ENCODE measurements at regions of chr17 and their contacts with region 1.

Region 1: DNA sequence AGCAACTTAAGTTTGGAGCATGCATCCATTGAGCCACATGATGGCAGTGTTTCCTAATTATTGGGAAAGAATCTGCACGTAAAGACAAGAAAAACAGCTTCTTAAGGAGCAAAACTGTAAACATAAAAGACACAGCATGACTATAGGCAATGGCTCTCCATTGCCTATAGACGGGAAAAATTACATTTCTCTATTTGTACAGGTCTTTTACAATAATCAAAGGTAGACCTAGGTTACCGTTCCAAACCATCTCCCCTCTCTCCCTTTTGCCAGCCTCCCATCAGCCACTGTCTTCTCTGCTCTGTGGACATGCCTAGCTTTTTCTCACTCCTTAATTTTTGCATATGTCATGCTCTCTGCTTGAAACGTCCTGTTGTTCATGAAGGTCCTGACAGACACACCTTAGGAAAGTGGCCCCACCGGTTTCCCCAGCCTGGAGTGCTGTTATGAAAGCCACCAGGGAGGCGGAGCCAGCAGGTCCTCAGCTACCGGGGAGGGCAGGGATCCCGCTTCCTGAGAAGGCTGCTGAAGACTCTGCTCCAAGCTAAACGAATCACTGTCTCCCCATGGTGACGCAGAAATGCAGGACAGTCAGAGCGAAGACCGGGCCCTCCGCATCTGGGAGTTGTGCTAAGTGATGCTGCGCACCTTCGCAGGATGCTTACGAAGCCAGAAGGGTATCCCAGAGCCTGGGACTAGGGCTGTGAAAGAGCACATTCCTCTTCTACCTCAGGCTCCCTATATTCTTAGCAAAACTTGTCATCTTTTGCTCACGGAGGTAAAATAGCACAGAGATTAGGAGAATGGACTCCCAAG is 2.2 kb upstream of the SLC16A11 start:
- DNase-seq: peak; percentile 88 to 95 (median 93)
- H3K4me3 ChIP-seq: peak overlapping the region in 5 of 7 experiments; percentile 8 to 69 (median 33)
- H3K27ac ChIP-seq: no peak overlapping the region
- H3K4me1 ChIP-seq: peaks cover 5 to 42% (median 37%) of the 10 kb centered on the region in 4 experiments
- H3K27me3 ChIP-seq: peaks cover 3 to 43% (median 21%) of the 10 kb centered on the region in 5 experiments

Region 2: GRCh38 chr17:7021993-7022778 is 23.9 kb before region 1 on chr17:
- CTCF ChIA-PET with region 1: interaction called, 9 read pairs
- POLR2A ChIA-PET with region 1: interaction called, 12 read pairs
- DNase-seq: peak; percentile 74 to 95 (median 95)
- H3K4me3 ChIP-seq: peak overlapping the region; percentile 2 to 74 (median 45)
- H3K27ac ChIP-seq: peak overlapping the region in 1 of 2 experiments; percentile 25
- H3K4me1 ChIP-seq: peaks cover 3 to 58% (median 41%) of the 10 kb centered on the region in 4 experiments
- H3K27me3 ChIP-seq: peaks cover 0 to 3% (median 0%) of the 10 kb centered on the region in 5 experiments

Region 3: DNA sequence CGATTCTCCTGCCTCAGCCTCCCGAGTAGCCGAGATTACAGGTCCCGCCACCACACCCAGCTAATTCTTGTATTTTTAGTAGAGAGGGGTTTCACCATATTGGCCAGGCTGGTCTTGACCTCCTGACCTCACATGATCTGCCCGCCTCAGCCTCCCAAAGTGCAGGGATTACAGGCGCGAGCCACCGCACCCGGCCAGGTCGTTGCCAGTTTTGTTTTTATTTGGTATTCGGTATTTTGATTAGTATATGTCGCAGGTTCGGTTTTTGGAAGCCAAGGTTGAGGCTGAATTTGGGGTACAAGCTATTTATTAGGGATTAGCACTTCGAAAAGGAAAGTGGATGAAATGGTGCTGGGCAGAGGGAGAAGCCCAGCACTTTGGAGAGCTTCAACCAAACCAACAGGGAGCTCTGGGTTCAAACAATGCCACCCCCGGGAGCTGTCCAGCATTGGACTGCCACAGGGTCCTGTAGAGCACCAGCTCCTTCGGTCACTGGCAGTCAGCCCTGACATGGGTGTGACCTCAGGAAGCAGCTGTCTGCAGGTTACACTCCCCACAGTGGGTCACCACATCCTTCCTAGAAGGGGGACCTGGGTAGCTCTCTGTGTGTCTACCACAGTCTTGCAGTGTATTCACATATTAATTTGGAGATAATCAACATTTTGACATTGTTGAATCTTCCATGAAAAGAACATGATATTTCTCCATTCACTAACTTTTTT is 35.4 kb after region 1 on chr17:
- CTCF ChIA-PET with region 1: interaction called, 11 read pairs
- POLR2A ChIA-PET with region 1: no interaction called
- DNase-seq: peak; percentile 66 to 97 (median 96)
- H3K4me3 ChIP-seq: peak overlapping the region in 1 of 7 experiments; percentile 0
- H3K27ac ChIP-seq: no peak overlapping the region
- H3K4me1 ChIP-seq: peaks cover 3 to 43% (median 27%) of the 10 kb centered on the region in 4 experiments
- H3K27me3 ChIP-seq: peaks cover 0 to 8% (median 0%) of the 10 kb centered on the region in 5 experiments

Region 4: GRCh38 chr17:7136266-7136877 is 90.3 kb after region 1 on chr17:
- CTCF ChIA-PET with region 1: interaction called, 374 read pairs
- POLR2A ChIA-PET with region 1: interaction called, 4 read pairs
- DNase-seq: peak; percentile 84 to 93 (median 89)
- H3K4me3 ChIP-seq: no peak overlapping the region
- H3K27ac ChIP-seq: no peak overlapping the region
- H3K4me1 ChIP-seq: peaks cover 0 to 30% (median 26%) of the 10 kb centered on the region in 4 experiments
- H3K27me3 ChIP-seq: peaks cover 0 to 2% (median 0%) of the 10 kb centered on the region in 5 experiments

Region 5: DNA sequence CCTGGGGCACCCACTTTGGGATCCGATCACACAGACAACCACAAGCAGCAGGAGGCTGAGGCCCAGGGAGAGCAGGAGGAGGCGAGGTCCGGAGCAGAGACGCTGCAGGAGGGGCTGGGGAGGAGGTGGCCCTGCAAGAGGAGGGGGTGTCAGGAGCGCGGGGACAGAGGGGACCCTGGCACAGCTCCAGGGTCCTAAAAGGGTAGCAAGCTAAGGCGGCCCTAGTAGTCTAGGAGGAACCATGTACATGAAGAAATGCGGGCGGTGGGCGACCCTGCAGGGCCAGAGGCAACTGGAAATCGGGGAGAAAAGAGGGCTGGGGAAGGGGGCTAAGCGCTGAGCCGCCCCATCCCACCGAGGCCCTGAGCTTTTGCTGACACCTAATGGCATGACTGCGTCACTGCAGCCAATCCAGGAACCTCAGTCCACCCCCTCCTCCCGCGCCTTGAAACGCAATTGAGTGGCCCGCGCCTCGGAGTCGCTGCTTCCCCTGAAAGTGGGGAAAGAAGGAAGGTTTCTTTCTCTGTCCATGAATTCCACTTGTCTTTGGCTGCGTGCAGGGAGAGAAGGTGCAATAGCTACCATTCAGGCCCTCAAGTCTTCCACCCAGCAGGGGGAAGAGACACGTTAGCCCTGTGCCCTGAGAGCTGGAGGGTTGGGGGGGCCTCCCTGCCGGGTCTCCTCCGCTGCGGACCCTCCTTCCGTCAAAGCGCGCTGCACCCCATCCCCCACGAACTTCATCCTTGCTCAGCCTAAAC is 131.3 kb after region 1 on chr17:
- CTCF ChIA-PET with region 1: interaction called, 44 read pairs
- POLR2A ChIA-PET with region 1: interaction called, 7 read pairs
- DNase-seq: peak; percentile 66 to 81 (median 80)
- H3K4me3 ChIP-seq: peak overlapping the region; percentile 24 to 90 (median 70)
- H3K27ac ChIP-seq: no peak overlapping the region
- H3K4me1 ChIP-seq: peaks cover 0 to 35% (median 28%) of the 10 kb centered on the region in 4 experiments
- H3K27me3 ChIP-seq: no peaks in the 10 kb centered on the region

Region 6: DNA sequence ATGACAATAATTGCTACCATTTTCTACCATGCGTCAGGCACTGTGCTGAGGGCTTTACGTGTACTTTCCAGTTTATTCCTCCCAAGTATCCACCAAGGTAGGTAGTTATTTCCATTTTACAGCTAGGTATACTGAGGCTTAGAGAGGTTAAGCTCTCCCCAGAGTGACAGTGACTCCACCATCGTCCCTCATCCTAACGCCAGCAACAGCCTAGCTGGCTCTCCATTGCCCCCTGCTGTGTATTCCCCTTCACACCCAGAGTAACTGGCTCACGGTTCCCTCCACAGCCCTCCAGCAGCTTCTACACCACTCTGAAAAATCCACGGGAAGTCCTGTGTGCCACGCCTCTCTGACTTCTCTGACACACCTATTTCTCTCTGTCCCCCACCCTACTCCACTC is 140.1 kb after region 1 on chr17:
- CTCF ChIA-PET with region 1: interaction called, 14 read pairs
- POLR2A ChIA-PET with region 1: no interaction called
- DNase-seq: peak in 2 of 3 donors; percentile 52 to 64
- H3K4me3 ChIP-seq: no peak overlapping the region
- H3K27ac ChIP-seq: no peak overlapping the region
- H3K4me1 ChIP-seq: peaks cover 0 to 7% (median 6%) of the 10 kb centered on the region in 4 experiments
- H3K27me3 ChIP-seq: no peaks in the 10 kb centered on the region

Region 7: DNA sequence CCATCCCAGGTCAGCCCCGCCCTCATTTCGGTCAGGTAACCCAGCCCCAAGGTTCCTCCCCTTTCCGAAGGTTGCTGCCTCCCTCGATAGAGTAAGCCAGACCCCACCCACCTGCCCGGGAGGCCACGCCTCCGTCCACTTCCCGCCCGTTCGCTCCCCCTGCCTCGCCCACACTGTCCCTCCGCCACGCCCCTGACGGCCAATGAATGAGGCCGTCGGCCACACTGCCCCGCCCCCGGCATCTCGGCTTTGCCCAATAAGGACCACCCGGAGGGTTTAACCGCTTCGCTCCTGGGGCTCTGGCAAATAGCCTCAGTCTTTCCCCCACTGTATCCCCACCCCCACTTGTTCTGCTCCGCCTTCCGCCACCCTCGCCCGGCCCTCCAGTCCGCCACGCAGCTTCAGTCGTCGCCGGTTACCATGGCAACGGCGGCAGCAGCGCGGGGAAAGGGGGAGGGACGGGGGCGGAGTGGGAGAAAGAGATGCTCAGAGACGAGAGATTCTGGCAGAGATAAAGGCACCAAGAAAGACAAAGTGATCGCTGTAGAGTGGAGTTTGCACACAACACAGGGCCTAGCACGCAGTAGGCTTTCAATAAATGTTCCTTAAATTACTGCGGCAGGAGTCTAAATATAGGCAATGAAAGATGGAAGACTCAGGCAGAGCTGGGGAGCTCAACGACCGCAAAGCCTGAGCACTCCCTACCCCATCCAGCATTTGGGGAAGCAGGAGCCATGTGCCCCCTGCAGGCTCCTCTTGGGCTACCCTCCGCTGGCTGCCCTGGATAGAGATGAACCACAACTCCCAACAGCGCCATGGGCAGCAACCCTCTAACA is 168.4 kb after region 1 on chr17:
- CTCF ChIA-PET with region 1: interaction called, 10 read pairs
- POLR2A ChIA-PET with region 1: no interaction called
- DNase-seq: peak; percentile 97 to 99 (median 99)
- H3K4me3 ChIP-seq: peak overlapping the region; percentile 40 to 82 (median 67)
- H3K27ac ChIP-seq: peak overlapping the region; percentile 87 to 94
- H3K4me1 ChIP-seq: peaks cover 8 to 59% (median 52%) of the 10 kb centered on the region in 4 experiments
- H3K27me3 ChIP-seq: no peaks in the 10 kb centered on the region

Measured in common myeloid progenitor, CD34-positive (primary cell).